ENCODE measurements at regions of chr7 and their contacts with region 1.

Region 1: GRCh38 chr7:142782922-142783900 is 12.4 kb downstream of the PRSS2 start:
- DNase-seq: peak; percentile 63
- H3K4me3 Mint-ChIP-seq: peak overlapping the region; percentile 75
- H3K27ac Mint-ChIP-seq: peak overlapping the region; percentile 87
- H3K4me1 Mint-ChIP-seq: peaks cover 11% of the 10 kb centered on the region
- H3K27me3 Mint-ChIP-seq: no peaks in the 10 kb centered on the region

Region 2: DNA sequence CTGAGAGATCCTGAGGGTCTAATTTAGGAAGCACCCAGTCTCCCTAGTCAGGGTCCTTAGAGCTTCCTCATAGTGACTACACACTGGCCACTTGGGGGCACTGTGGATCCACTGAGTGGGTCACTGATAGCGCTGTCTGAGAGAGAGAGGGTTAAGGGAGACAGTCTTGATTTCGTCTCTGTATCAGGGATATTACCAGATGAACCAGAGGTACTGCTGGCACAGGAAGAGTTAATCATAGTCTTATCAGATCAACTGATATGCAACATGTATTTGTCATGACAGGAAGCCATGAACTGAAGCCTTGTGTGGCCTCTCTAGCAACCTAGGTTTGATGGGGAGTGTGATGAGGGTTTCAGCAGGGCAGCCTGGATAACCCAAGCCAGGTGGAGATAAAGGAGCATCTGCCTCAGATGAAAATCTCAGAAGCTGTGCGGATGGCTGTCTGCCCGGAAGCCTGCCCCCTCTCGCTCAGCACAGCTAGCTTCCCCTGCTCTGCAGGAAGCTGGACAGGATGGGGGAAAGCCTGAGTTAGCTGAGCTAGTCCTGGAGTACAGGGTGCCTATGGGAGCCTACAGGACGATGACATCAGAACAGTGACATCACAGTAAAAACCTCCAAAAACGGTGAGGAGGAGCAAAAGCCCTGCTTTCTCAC is 248.0 kb before region 1 on chr7:
- intact Hi-C with region 1: loop called (anchors 5 kb)
- DNase-seq: peak; percentile 58
- H3K4me3 Mint-ChIP-seq: peak overlapping the region; percentile 59
- H3K27ac Mint-ChIP-seq: peak overlapping the region; percentile 62
- H3K4me1 Mint-ChIP-seq: peaks cover 29% of the 10 kb centered on the region
- H3K27me3 Mint-ChIP-seq: no peaks in the 10 kb centered on the region

Region 3: DNA sequence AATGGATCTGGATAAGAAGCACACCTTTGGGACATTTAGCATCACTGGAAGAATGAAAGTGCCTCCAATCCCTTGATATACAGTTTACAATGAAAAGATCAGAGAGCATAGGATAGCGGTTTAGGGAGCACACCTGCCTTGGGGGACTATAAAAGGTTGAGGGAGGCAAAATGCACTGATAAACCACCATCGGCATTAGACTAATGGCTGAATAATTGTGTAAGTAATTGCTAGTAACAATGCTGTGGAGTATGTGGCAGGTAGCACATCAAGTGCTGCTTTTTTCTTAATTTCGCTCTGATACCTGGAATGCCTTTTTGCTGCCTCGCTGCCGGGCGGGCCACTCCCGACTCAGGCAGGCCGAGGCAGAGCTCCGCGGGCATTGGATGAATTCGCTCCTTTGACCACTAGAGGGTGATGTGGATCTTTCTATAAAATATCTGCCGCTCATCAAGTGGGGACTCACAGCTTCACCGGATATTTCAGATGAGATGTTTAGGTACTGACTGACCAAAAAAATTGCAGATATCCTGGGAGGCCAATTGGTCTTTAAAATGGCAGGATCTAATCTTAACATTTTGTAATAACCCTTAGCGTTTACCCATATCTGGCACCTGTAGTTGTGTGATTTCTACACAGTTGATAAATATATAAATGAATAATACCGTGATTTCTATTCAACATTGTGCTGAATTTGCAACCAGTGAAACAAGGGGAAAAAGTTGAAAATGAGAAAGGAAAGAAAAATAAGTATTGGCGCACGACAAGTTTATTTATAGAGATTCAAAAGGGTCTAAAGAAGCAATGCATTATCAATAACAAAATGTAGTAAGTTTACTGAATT is 150.7 kb before region 1 on chr7:
- intact Hi-C with region 1: loop called (anchors 1 kb)
- DNase-seq: peak; percentile 49
- H3K4me3 Mint-ChIP-seq: no peak overlapping the region
- H3K27ac Mint-ChIP-seq: no peak overlapping the region
- H3K4me1 Mint-ChIP-seq: peaks cover 18% of the 10 kb centered on the region
- H3K27me3 Mint-ChIP-seq: peaks cover 11% of the 10 kb centered on the region

Region 4: GRCh38 chr7:142669074-142669654 is 114.0 kb before region 1 on chr7:
- intact Hi-C with region 1: loop called (anchors 1 kb)
- DNase-seq: no peak
- H3K4me3 Mint-ChIP-seq: no peak overlapping the region
- H3K27ac Mint-ChIP-seq: no peak overlapping the region
- H3K4me1 Mint-ChIP-seq: peaks cover 22% of the 10 kb centered on the region
- H3K27me3 Mint-ChIP-seq: no peaks in the 10 kb centered on the region

Region 5: GRCh38 chr7:142711746-142712619 is 71.2 kb before region 1 on chr7:
- intact Hi-C with region 1: loop called (anchors 2 kb)
- DNase-seq: peak; percentile 2
- H3K4me3 Mint-ChIP-seq: peak overlapping the region; percentile 78
- H3K27ac Mint-ChIP-seq: peak overlapping the region; percentile 85
- H3K4me1 Mint-ChIP-seq: peaks cover 66% of the 10 kb centered on the region
- H3K27me3 Mint-ChIP-seq: no peaks in the 10 kb centered on the region

Region 6: GRCh38 chr7:142796608-142797385 is 13.6 kb after region 1 on chr7:
- intact Hi-C with region 1: loop called (anchors 1 kb)
- DNase-seq: no peak
- H3K4me3 Mint-ChIP-seq: peak overlapping the region; percentile 97
- H3K27ac Mint-ChIP-seq: peak overlapping the region; percentile 99
- H3K4me1 Mint-ChIP-seq: peaks cover 77% of the 10 kb centered on the region
- H3K27me3 Mint-ChIP-seq: no peaks in the 10 kb centered on the region

Region 7: DNA sequence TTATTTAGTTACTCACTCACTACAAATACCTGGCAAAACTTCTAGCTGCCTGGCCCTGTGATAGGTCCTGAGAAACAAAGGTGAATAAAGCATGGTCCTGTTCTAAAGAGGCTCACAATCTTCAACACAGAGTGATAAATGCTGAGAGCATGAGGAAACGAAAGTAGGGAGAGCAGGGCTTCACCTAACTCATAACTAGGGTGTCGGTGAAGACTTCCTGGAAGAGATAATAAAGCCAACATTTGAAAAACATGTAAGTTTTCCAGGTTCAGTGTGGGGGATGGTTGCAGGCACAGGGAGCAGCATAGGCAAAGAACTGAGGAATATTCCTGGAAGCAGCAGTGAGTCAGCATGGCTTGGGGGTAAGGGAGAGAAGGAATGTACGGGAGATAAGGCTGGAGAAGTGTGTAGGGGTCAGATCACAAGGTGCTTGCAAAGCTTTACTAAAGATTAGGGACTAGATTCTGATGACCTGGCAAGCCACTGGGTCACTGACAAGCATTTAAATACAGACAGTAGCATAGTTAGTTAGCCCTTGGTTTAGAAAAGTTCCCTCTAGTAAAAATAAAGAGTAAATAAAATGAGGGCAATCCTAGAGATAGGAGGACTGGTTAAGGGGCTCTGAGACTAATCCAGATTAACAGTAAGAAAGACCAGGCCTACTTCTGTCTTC is 173.9 kb after region 1 on chr7:
- intact Hi-C with region 1: no loop called
- DNase-seq: no peak
- H3K4me3 Mint-ChIP-seq: no peak overlapping the region
- H3K27ac Mint-ChIP-seq: no peak overlapping the region
- H3K4me1 Mint-ChIP-seq: no peaks in the 10 kb centered on the region
- H3K27me3 Mint-ChIP-seq: peaks cover 15% of the 10 kb centered on the region

Region 8: DNA sequence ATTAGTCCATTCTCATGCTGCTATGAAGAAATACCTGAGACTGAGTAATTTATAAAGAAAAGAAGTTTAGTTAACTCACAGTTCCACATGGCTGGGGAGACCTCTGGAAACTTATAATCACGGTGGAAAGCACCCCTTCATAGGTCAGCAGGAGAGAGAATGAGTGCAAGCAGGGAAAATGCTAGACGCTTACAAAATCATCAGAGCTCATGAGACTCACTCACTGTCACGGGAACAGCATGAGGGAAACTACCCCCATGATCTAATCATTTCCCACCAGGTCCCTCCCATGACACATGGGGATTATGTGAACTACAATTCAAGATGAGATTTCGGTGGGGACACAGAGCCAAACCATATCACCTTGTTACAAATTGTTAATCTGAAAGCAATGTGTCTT is 415.8 kb after region 1 on chr7:
- intact Hi-C with region 1: no loop called
- DNase-seq: no peak
- H3K4me3 Mint-ChIP-seq: no peak overlapping the region
- H3K27ac Mint-ChIP-seq: no peak overlapping the region
- H3K4me1 Mint-ChIP-seq: no peaks in the 10 kb centered on the region
- H3K27me3 Mint-ChIP-seq: peaks cover 13% of the 10 kb centered on the region